Panc1 (cell line): ENCODE measurements at regions of chr14 and their contacts with region 1.

Region 1: DNA sequence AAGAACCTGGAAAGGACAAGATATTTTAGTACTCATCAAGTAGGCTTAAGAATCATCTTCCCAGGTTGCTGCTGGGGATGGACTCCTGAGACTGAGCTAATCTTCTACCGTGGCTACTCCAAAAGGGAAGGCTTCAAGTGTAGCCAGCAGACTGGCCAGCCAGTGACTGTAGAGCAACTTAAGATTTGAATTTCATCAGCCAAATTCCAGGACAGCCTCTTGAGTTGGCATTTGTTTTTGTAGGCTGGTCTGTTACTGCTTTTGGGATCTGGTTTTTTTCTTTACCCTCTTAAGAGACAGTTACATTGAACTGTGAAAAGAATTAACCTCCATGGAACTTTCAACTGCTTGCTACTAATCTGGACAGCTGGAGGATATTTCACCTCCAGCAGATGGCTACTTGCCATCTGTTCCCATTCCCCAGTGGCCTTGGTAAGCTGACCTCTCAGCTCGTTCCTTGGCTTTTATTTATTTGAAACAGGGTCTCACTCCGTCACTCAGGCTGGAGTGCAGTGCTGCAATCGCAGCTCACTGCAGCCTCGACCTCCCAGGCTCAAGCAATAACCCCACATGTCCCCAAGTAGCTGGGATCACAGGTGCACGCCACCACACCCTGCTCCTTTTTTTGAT is 20.7 kb downstream of the VTI1B start:
- DNase-seq: no peak
- ATAC-seq: no peak
- H3K4me3 ChIP-seq: no peak overlapping the region
- H3K27ac ChIP-seq: no peak overlapping the region
- H3K4me1 ChIP-seq: no peaks in the 10 kb centered on the region
- H3K27me3 ChIP-seq: no peaks in the 10 kb centered on the region
- CTCF ChIP-seq: no peak

Region 2: DNA sequence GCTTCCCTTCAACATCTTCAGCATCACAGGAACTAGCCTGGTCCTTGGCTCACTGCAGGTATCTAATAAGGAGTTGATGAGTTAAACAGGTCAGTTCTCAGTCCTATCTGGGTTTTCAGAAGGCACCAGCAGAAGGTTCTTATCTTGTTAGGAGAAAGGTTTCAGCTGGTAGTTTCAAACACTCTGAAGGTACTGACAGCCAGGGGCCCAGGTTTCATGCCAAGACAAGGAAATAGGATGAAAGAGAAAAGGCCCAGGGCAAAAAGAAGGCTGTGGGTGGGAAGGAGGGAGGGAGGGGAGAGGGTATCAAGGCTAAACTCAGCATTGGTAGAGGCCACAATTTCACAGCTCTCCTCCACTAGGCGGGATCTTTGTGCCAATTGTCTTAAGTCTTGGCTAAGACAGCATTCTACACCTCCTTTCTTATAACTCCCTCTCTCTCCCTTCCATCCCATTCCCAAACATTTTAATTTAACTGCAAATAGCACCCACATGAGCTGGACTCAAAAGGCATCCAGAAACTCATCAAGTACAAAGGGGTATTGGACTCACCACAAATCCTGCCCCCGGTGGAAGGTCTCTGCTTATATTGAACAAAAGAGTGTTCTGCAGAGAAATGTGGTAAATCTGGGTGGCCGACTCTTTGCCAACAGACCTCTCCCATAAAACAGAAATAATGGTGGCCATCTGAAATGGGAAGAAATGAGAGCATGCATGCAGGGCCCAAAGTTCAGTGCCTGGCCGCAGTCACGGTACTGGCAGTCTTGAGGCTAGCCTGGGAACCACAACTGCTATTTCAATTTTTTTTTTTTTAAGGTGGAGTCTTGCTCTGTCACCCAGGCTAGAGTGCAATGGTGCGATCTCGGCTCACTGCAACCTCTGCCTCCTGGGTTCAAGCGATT is 186.3 kb before region 1 on chr14:
- CTCF ChIA-PET with region 1: no interaction called
- POLR2A ChIA-PET with region 1: no interaction called
- in situ Hi-C with region 1: no loop called
- intact Hi-C with region 1: no loop called
- DNase-seq: no peak
- ATAC-seq: no peak
- H3K4me3 ChIP-seq: no peak overlapping the region
- H3K27ac ChIP-seq: no peak overlapping the region
- H3K4me1 ChIP-seq: no peaks in the 10 kb centered on the region
- H3K27me3 ChIP-seq: no peaks in the 10 kb centered on the region
- CTCF ChIP-seq: no peak; the same call in 1 of the 2 replicates

Region 3: DNA sequence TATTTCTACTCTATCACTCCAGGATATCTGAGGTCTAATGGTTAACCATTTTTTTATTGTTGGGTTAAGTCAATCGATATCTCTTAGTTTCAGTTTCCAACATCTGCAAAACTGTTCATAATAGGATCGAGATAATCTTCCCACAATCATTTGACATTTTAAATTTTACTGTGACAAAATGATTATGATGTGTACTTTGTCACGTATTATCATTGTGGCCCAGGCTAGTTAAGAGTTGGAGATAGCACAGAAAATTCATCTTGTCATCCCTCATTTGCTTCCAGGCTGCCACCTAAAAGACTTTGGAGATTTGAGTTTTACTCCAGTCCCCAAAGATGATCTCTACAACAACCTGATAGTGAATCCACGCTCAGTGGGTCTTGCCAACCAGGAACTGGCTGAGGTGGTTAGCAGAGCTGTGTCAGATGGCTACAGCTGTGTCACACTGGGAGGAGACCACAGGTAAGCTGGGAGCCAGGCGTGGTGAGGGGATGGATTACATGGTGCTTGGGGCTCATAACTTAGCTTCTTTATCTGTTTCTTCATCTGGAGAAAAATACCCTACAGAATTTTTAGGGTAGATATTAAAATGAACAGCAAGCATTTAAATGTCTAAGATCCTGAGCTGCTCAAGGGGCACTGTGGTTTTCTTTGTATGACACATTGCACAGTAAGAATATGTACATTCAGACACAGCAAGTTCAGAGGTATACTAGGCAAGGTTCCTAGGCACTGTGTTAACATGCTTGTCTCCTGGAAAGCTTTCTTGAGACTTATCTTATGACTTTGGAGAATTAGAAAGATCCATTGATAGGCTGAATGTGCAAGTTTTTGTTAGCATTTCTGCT is 11.6 kb before region 1 on chr14:
- CTCF ChIA-PET with region 1: no interaction called
- POLR2A ChIA-PET with region 1: interaction called, 11 read pairs
- in situ Hi-C with region 1: no loop called
- intact Hi-C with region 1: no loop called
- DNase-seq: no peak
- ATAC-seq: no peak
- H3K4me3 ChIP-seq: no peak overlapping the region
- H3K27ac ChIP-seq: no peak overlapping the region
- H3K4me1 ChIP-seq: no peaks in the 10 kb centered on the region
- H3K27me3 ChIP-seq: no peaks in the 10 kb centered on the region
- CTCF ChIP-seq: no peak